GM23248 (cell line): ENCODE measurements at regions of chr9 and their contacts with region 1.

Region 1: GRCh38 chr9:34343090-34343489 is 13.7 kb downstream of the NUDT2 start:
- DNase-seq: no peak
- H3K4me3 ChIP-seq: no peak overlapping the region
- H3K27ac ChIP-seq: no peak overlapping the region
- H3K4me1 ChIP-seq: no peaks in the 10 kb centered on the region
- H3K27me3 ChIP-seq: no peaks in the 10 kb centered on the region

Region 2: GRCh38 chr9:34376596-34377403 is 33.7 kb after region 1 on chr9 and contains the start of gene MYORG:
- in situ Hi-C with region 1: loop called (anchors 5 kb)
- DNase-seq: peak; percentile 87
- H3K4me3 ChIP-seq: peak within 1 kb of the TSS; percentile 79
- H3K27ac ChIP-seq: no peak within 1 kb of the TSS
- H3K4me1 ChIP-seq: no peaks in the 10 kb centered on the region
- H3K27me3 ChIP-seq: no peaks in the 10 kb centered on the region
- total RNA-seq, gene MYORG: 0.13 and 1.1 TPM in 2 replicates

Region 3: DNA sequence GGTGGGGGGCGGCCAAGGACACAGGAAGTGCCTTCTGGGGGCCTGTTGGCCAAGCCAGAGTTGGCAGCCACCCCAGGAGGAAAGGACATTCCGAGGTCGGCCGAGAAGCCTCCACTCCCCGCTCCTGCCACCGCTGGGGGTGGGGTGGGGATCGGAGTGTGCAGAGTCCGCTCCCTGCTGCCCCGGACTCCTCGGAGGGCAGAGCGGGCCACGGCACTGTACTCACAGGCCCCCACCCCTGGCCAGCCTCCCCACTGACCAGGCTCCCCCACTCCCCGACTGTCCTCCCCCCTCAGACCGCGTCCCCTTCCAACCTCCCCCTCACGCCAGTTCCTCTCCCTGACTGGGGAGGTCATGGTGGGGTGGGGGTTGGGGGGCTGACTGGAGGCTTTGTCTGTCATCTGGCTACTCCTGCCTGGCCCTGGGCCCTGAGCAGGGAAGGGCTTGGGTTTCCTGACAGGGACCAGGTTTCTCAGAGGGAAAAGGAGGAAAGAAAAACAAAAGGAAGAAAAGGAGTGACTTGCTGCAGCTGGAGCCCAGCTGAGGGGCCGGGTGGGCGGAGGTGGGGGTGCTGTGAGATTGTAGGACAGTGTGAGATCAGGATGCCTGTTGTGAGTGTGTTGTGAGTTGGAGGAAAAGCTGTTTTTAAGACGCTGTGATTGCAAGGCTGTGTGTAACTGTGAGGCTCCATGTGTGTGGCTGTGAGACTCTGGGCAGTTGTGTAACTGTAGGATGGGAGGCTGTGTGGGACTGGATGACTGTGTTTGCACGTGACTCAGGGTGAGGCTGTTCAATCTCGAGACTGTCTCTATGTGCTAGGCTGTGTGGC is 216.7 kb after region 1 on chr9:
- in situ Hi-C with region 1: no loop called
- DNase-seq: peak; percentile 81
- H3K4me3 ChIP-seq: no peak overlapping the region
- H3K27ac ChIP-seq: no peak overlapping the region
- H3K4me1 ChIP-seq: no peaks in the 10 kb centered on the region
- H3K27me3 ChIP-seq: no peaks in the 10 kb centered on the region

Region 4: GRCh38 chr9:35272989-35273388 is 929.9 kb after region 1 on chr9:
- in situ Hi-C with region 1: no loop called
- DNase-seq: peak; percentile 76
- H3K4me3 ChIP-seq: no peak overlapping the region
- H3K27ac ChIP-seq: peak overlapping the region; percentile 15; the same call in 1 of the 2 replicates
- H3K4me1 ChIP-seq: peaks cover 22% of the 10 kb centered on the region
- H3K27me3 ChIP-seq: no peaks in the 10 kb centered on the region